Activated CD4-positive, alpha-beta T cell treated with anti-CD3 and anti-CD28 coated beads, Interleukin-2, amount 10 ng/mL, durations not matched to agents 24 days and 14 days (primary cell): ENCODE measurements at regions of chr21 and their contacts with region 1.

Region 1: DNA sequence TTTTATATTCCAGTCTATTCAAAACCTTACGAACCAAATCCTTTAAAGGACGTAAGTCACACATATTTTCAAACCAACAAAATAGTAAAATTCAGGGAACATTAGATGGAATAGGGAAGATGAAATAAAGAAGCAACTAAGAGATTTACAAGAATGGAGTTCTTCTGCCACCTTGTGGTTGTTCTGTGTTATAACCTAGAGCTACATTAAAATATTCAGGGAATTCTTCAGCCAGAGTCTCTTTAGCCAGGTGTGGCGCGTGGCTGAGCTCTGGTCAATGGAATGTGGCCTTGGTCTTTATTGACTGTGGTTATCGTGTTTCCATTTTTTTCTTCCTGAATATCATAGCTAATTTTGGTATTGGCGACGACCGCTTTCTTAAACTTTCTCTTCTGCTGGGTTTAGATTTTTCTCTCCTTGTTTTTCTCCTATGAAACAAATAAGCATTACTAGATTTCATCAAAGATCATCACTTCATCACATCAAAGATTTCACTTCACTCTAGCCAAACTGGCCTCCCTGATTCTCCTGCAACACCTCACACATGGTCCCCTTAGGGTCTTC is 221.3 kb downstream of the MRPL39 start:
- DNase-seq: no peak
- H3K4me3 Mint-ChIP-seq: no peak overlapping the region
- H3K27ac Mint-ChIP-seq: peak overlapping the region; percentile 43
- H3K4me1 Mint-ChIP-seq: peaks cover 13% of the 10 kb centered on the region
- H3K27me3 Mint-ChIP-seq: peaks cover 6% of the 10 kb centered on the region

Region 2: GRCh38 chr21:23853796-23854379 is 1532.1 kb before region 1 on chr21:
- intact Hi-C with region 1: loop called (anchors 10 kb)
- DNase-seq: peak; percentile 70
- H3K4me3 Mint-ChIP-seq: no peak overlapping the region
- H3K27ac Mint-ChIP-seq: no peak overlapping the region
- H3K4me1 Mint-ChIP-seq: peaks cover 5% of the 10 kb centered on the region
- H3K27me3 Mint-ChIP-seq: peaks cover 8% of the 10 kb centered on the region

Region 3: DNA sequence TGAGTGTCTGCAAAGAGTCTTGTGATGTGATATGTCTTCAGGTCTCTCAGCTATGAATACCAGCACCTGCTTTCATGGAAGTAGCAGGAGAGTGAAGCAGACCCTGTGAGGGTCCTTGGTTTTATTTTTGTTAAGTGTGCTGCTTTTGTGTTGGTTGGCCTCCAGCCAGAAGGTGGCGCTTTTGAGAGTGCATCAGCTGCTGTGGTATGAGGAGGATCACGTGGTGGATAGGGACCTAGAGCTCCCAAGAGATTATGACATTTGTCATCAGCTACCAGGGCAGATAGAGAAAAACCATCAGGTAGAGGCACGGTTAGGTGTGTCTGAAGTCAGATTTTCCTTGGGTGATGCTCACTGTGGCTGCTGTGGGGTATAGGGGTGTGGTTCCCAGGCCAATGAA is 1010.8 kb before region 1 on chr21:
- intact Hi-C with region 1: loop called (anchors 5 kb)
- DNase-seq: peak; percentile 65
- H3K4me3 Mint-ChIP-seq: no peak overlapping the region
- H3K27ac Mint-ChIP-seq: no peak overlapping the region
- H3K4me1 Mint-ChIP-seq: no peaks in the 10 kb centered on the region
- H3K27me3 Mint-ChIP-seq: no peaks in the 10 kb centered on the region

Region 4: DNA sequence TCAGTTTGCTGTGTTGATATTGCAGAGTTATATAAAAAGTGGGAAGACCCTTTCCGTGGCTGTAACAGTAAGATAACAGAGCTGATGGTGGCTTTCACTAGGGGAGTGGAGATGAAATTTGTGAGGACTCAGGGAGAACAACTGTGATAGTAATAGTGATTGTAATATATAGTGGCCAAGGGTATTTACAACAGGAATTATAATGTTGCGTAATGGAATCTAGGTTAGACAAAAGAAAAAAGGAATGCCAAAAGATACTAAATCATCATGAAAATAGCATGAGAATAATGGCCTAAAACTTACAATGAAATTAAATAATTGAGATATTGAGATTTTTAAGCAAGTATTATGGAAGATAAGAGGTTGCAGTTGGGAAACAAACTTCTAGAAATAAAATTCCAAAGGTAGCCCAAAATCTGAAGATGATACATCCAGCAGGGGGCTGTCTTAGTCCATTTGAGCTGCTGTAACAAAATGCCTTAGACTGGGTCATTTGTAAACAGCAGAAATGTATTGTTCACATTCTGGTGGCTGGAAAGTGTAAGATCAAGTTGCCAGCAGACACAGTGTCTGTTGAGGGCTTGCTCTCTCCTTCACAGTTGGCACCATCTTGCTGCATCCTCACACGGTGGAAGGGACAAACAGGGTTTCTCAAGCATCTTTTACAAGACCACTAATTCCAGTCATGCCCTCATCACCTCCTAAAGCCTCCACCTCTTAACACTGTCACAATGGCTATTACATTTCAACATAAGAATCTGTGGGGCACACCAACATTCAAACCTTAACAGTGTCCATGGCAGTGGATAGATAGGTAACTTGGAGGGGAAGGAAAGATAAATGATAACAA is 489.9 kb before region 1 on chr21:
- intact Hi-C with region 1: loop called (anchors 5 kb)
- DNase-seq: no peak
- H3K4me3 Mint-ChIP-seq: no peak overlapping the region
- H3K27ac Mint-ChIP-seq: no peak overlapping the region
- H3K4me1 Mint-ChIP-seq: no peaks in the 10 kb centered on the region
- H3K27me3 Mint-ChIP-seq: no peaks in the 10 kb centered on the region

Region 5: GRCh38 chr21:25283720-25284119 is 102.3 kb before region 1 on chr21:
- intact Hi-C with region 1: loop called (anchors 1 kb)
- DNase-seq: peak; percentile 58
- H3K4me3 Mint-ChIP-seq: no peak overlapping the region
- H3K27ac Mint-ChIP-seq: no peak overlapping the region
- H3K4me1 Mint-ChIP-seq: no peaks in the 10 kb centered on the region
- H3K27me3 Mint-ChIP-seq: peaks cover 11% of the 10 kb centered on the region

Region 6: DNA sequence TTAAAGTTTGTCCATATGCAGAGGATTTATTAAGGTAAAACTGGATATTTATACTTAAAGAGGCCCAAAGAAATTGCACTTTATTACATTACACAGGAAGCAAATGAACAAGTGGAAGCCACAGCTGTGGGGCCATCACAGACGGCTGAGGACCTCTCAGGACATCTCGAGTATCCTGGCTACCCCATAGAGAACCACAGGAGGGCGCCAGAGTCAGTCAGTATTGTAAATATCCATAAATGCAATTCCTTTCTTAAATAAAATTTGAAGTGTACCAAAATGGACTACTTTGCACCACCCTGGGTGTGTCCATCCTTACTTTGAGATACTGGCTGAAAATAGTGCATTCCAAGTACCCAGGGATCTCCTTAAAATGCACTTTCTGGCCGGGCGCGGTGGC is 35.9 kb before region 1 on chr21:
- intact Hi-C with region 1: loop called (anchors 1 kb)
- DNase-seq: peak; percentile 68
- H3K4me3 Mint-ChIP-seq: no peak overlapping the region
- H3K27ac Mint-ChIP-seq: no peak overlapping the region
- H3K4me1 Mint-ChIP-seq: no peaks in the 10 kb centered on the region
- H3K27me3 Mint-ChIP-seq: peaks cover 4% of the 10 kb centered on the region